Panc1 (cell line): ENCODE measurements at regions of chr17 and their contacts with region 1.

Region 1: DNA sequence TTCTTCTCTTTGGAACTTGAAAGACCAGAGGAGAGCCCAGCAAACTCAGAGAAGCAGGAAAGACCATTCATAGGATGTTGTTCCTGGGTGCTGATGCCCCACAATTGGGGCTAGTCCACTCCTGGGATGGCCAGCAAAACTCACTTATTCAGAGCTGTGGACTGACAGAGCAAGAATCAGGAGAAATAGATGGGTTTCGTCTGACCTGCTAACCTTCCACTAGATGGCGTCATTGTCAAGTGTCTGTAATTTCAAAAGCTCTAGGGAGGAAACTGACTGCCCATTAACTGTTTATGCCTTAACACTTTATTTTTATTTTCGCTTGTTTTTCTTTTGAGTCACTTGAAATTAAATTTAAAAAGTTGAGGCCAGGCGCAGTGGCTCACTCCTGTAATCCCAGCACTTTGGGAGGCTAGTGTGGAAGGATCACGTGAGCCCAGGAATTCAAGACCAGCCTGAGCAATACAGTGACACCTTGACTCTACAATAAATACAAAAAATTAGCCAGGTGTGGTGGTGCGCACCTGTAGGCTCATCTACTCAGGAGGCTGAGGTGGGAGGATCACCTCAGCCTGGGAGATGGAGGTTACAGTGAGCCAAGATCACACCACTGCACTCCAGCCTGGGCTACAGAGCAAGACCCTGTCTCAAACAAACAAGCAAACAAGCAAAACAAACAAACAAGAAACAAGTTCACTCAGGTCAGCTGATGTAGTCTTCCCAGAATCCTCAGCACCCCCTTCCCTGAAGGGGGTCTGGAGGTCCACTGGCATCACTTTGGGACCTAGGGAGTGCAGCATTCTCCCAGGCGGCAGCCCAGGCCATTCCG is 28.6 kb upstream of the MILR1 start:
- DNase-seq: peak; percentile 42
- ATAC-seq: peak; percentile 90
- H3K4me3 ChIP-seq: no peak overlapping the region
- H3K27ac ChIP-seq: no peak overlapping the region
- H3K4me1 ChIP-seq: no peaks in the 10 kb centered on the region; the same call in 1 of the 2 replicates
- H3K27me3 ChIP-seq: no peaks in the 10 kb centered on the region
- CTCF ChIP-seq: peak; percentile 78

Region 2: GRCh38 chr17:64306850-64307463 is 113.4 kb before region 1 on chr17:
- CTCF ChIA-PET with region 1: interaction called, 10 read pairs
- POLR2A ChIA-PET with region 1: no interaction called
- in situ Hi-C with region 1: no loop called
- intact Hi-C with region 1: no loop called
- DNase-seq: no peak
- ATAC-seq: 0 out of 2 replicates have a peak, but pooled peaks have one; percentile 62
- H3K4me3 ChIP-seq: no peak overlapping the region
- H3K27ac ChIP-seq: no peak overlapping the region
- H3K4me1 ChIP-seq: no peaks in the 10 kb centered on the region
- H3K27me3 ChIP-seq: no peaks in the 10 kb centered on the region
- CTCF ChIP-seq: peak; percentile 82

Region 3: DNA sequence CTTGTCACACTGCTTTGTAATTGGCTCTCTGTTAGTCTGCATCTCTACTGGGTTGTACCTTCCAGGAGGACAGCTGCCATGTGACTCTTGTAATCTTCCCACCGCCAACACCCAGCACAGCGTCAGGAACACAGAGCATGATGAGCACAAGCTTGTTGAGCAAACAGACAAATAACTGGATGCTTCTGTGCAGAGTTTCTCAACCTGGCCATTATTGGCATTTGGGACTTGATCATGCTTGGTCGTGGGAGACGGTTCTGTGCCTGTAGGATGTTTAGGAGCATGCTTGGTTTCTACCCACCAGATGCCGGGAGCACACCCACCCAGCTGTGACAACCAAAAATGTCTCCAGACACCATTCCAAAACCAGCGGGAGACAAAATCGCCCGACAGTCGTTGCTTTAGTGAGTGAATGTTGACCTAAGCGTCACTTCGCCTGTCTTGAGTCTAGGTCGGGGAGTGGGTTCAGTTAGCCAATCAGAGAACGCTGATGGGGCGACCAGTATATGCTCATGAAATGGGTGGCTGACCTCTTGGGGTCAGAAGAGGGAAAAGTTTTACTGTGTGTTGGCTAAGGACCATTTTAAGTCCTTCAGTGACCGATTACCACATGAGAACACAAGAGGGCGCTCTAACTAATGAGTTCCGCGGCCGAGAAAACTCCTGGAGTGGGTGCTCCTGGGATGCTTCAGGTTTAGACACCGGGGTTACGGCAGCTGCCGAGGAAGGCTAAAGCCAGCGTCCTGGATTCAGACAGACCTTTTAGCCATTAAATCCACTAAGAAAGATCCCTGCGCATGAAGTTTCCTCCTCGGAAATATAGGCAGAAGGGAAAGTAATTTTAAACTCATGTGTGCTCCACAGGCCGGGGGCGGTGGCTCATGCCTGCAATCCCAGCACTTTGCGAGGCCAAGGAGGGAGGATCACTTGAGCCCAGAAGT is 99.5 kb before region 1 on chr17:
- CTCF ChIA-PET with region 1: interaction called, 7 read pairs
- POLR2A ChIA-PET with region 1: no interaction called
- in situ Hi-C with region 1: no loop called
- intact Hi-C with region 1: loop called (anchors 1 kb)
- DNase-seq: peak; percentile 32
- ATAC-seq: peak; percentile 92
- H3K4me3 ChIP-seq: peak overlapping the region in 1 of 2 experiments; percentile 34; a peak in 2 of 4 replicates
- H3K27ac ChIP-seq: no peak overlapping the region
- H3K4me1 ChIP-seq: no peaks in the 10 kb centered on the region
- H3K27me3 ChIP-seq: no peaks in the 10 kb centered on the region
- CTCF ChIP-seq: peak; percentile 82

Region 4: GRCh38 chr17:64491034-64491859 is 70.9 kb after region 1 on chr17:
- CTCF ChIA-PET with region 1: interaction called, 21 read pairs
- POLR2A ChIA-PET with region 1: interaction called, 4 read pairs
- in situ Hi-C with region 1: no loop called
- intact Hi-C with region 1: loop called (anchors 5 kb)
- DNase-seq: no peak
- ATAC-seq: peak; percentile 74
- H3K4me3 ChIP-seq: no peak overlapping the region
- H3K27ac ChIP-seq: no peak overlapping the region
- H3K4me1 ChIP-seq: no peaks in the 10 kb centered on the region
- H3K27me3 ChIP-seq: no peaks in the 10 kb centered on the region
- CTCF ChIP-seq: peak; percentile 75

Region 5: GRCh38 chr17:64499805-64500486 is 79.6 kb after region 1 on chr17:
- CTCF ChIA-PET with region 1: interaction called, 3 read pairs
- POLR2A ChIA-PET with region 1: interaction called, 11 read pairs
- in situ Hi-C with region 1: no loop called
- intact Hi-C with region 1: no loop called
- DNase-seq: no peak
- ATAC-seq: no peak
- H3K4me3 ChIP-seq: no peak overlapping the region
- H3K27ac ChIP-seq: no peak overlapping the region
- H3K4me1 ChIP-seq: peaks cover 51% of the 10 kb centered on the region
- H3K27me3 ChIP-seq: no peaks in the 10 kb centered on the region
- CTCF ChIP-seq: no peak